Astrocyte of the cerebellum (primary cell): ENCODE measurements at regions of chr19 and their contacts with region 1.

Region 1: DNA sequence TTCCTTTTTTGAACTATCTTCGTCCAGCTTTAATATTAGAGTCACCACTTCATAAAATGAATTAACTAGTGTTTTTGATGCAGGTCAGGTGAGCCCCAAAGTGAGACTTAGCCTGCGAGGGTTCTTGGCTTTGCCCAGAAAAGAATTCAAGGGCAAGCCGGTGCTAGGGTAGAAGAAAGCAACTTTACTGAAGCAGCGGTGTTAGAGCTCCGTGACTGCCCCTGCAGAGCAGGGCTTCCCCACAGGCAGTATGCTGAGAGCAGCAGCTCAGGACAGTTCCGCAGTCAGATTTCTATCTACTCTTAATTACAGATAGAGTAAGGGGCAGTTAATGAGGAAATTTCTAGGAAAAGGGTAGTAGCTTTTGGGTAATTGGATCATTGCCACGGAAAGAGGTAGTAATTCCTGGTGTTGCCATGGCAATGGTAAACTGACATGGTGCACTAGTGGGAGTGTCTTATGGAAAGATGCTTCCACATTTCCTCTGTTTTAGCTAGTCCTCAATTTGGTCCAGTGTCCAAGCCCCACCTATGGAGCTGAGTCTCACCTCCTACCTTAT is 432.2 kb upstream of the ZNF507 start:
- DNase-seq: no peak
- H3K4me3 ChIP-seq: no peak overlapping the region
- CTCF ChIP-seq: no peak

Region 2: DNA sequence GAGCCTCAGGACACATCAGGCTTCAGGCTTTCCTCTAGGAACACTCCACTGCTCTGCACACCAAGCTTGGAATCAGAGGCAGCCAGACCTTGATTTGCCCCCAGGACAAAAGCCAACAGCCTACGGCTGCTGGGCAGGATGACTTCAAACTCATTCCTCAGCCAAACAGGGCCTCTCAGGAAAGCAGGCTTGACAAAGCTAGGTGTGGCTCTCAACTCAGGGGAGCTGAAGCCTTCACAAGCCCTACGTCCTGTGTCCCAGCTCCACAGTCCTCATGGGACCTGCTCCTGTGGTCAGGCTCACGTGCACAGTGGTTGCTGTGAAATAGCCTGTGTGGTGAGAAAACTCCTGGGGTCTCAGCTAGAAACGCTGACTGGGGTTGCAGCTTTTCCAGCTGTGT is 33.3 kb after region 1 on chr19:
- in situ Hi-C with region 1: loop called (anchors 5 kb)
- DNase-seq: no peak
- H3K4me3 ChIP-seq: no peak overlapping the region
- CTCF ChIP-seq: no peak